ENCODE measurements at regions of chr19 and their contacts with region 1.

Region 1: DNA sequence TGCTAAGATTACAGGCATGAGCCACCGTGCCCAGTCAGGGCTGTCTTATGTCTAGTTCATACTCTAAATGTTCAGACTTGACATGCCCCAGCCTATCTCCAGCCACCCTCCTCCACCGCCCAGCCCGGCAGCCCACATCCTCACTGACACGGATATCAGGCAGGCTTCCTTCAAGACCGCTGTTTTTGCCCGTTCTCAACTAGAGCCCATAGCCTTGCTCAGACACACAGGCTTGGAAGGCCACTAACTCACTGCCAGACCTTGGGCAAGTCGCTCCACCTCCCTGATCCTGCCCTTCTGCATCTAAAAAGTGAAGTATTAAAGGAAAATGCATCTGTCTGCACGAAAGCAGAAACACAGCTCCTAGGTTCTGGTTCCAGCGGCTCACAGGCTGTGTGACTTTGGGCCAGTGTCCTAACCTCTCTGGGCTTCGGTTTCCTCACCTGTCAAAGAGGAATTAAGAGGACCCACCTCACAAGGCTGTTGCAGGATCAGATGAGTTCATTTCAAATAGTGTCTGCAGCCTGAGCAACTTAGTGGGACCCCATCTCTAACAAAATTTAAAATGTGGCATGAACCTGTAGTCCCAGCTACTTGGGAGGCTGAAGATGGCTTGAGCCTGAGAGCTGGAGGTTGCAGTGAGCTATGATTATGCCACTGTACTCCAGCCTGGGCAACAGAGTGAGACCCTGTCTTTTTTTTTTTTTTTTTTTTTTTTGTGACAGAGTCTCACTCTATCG is 14.5 kb upstream of the CERS4 start:
- DNase-seq: peak; percentile 40
- H3K4me3 ChIP-seq: no peak overlapping the region
- H3K27ac ChIP-seq: no peak overlapping the region
- H3K4me1 ChIP-seq: peaks cover 3% of the 10 kb centered on the region
- H3K27me3 ChIP-seq: no peaks in the 10 kb centered on the region
- CTCF ChIP-seq: no peak

Region 2: DNA sequence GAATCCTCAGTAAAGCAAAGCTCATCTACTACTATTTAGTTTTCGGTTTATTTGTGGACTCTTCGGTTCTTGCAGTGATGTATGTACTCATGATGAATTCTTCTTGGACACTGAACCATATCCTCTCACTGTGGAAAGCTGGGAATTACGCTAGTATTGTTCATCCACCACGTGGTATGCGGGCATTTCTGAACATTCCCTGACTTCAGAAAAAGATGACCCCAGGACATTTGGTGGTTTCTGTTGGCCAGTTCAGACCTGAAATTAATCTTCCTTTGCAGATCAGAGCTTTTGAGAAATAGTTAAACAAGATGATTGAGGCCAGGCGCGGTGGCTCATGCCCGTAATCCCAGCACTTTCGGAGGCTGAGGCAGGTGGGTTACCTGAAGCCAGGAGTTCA is 20.0 kb before region 1 on chr19:
- CTCF ChIA-PET with region 1: interaction called, 27 read pairs
- dilution Hi-C with region 1: no loop called
- in situ Hi-C with region 1: no loop called
- intact Hi-C with region 1: loop called (anchors 2 kb)
- DNase-seq: peak; percentile 99
- H3K4me3 ChIP-seq: no peak overlapping the region
- H3K27ac ChIP-seq: peak overlapping the region; percentile 54
- H3K4me1 ChIP-seq: peaks cover 9% of the 10 kb centered on the region
- H3K27me3 ChIP-seq: no peaks in the 10 kb centered on the region
- CTCF ChIP-seq: no peak

Region 3: DNA sequence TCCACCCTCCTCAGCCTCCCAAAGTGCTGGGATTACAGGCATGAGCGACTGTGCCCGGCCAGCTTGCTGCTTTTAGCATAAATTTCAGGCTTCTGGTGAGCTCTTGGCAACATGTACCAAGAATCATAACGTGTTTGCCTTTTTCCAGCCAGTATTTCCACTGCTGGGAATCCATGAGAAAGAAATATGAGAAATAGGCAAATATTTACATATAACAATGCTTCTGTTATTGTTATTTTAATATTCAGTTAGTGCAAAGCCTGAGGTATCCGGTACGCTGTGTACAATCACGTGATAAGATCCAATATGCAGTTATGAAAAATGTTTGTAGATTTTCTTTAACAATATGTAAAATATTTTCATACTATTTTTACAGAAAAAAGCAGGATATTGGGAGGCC is 14.6 kb before region 1 on chr19:
- CTCF ChIA-PET with region 1: interaction called, 27 read pairs
- dilution Hi-C with region 1: no loop called
- in situ Hi-C with region 1: no loop called
- intact Hi-C with region 1: loop called (anchors 2 kb)
- DNase-seq: no peak
- H3K4me3 ChIP-seq: no peak overlapping the region
- H3K27ac ChIP-seq: no peak overlapping the region
- H3K4me1 ChIP-seq: peaks cover 3% of the 10 kb centered on the region
- H3K27me3 ChIP-seq: no peaks in the 10 kb centered on the region
- CTCF ChIP-seq: no peak

Region 4: DNA sequence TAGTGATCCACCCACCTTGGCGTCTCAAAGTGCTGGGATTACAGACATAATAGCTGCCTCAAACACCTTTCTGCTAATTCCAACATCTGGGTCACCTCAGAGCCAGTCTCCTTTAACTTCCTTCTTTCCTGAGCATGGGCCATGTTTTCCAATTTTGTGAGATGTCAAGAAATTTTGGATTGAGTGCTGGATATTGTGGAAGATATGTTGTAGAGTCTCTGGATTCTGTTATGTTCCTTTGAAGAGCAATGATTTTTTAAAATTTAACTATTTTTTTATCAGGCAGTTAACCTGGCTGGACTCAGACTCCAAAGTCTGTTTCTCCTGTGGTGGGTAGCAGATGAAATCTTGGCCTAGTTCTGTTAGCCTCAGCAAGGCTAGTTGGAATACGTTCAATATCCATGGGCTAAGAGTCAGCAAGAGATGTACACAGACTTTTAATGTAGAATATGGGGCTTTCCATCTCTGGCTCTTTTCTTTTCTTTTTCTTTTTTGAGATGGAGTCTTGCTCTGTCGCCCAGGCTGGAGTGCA is 36.4 kb after region 1 on chr19:
- CTCF ChIA-PET with region 1: no interaction called
- dilution Hi-C with region 1: no loop called
- in situ Hi-C with region 1: no loop called
- intact Hi-C with region 1: loop called (anchors 2 kb)
- DNase-seq: no peak
- H3K4me3 ChIP-seq: no peak overlapping the region
- H3K27ac ChIP-seq: no peak overlapping the region
- H3K4me1 ChIP-seq: no peaks in the 10 kb centered on the region
- H3K27me3 ChIP-seq: no peaks in the 10 kb centered on the region
- CTCF ChIP-seq: no peak

Measured in mammary epithelial cell (primary cell).